OCI-LY7 (cell line): ENCODE measurements at regions of chr1 and their contacts with region 1.

Region 1: GRCh38 chr1:93846211-93846991 is 32.6 kb downstream of the DNTTIP2 start:
- DNase-seq: peak; percentile 92
- H3K4me3 ChIP-seq: peak overlapping the region; percentile 75
- H3K27ac ChIP-seq: peak overlapping the region; percentile 84
- H3K4me1 ChIP-seq: peaks cover 29% of the 10 kb centered on the region
- CTCF ChIP-seq: peak; percentile 59

Region 2: DNA sequence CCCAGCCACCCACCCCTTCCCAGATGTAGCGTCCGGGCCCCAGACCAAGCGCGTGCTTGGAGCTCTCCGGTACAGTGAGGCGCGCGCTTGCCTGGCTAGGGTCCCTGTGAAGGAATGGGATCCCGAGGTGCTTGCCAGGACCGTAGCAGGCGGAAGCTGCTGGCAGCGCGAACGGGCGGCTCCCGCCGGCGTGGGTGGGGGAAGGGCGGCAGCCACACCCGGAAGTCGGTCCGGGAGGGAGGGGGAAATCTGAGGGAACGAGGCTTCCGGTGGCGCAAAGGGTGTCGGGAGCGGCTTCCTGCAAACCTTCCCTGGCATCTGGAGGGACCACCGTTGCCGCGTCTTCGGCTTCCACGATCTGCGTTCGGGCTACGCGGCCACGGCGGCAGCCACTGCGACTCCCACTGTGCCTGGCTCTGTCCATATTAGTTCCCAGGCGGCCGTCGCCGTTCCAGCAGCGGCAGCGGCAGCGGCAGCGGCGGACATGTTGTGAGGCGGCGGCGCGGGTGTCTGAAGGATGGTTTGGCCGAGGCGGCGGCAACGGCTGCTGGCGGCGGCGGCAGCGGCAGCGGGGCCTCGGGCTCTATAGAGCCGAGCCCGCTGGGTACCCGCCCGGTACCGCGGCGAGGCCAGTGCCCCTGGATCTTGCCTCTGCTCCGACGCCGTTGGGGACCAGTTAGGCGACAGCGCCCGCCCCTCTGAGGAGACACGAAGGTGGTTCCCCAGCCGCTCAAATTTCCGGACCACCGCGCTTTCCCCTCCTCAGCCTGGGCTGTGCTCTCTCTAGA is 500.6 kb before region 1 on chr1 and contains the start of gene DR1:
- CTCF ChIA-PET with region 1: no interaction called
- POLR2A ChIA-PET with region 1: interaction called, 4 read pairs
- intact Hi-C with region 1: loop called (anchors 2 kb)
- DNase-seq: peak; percentile 92
- H3K4me3 ChIP-seq: peak within 1 kb of the TSS; percentile 87
- H3K27ac ChIP-seq: peak within 1 kb of the TSS; percentile 74
- H3K4me1 ChIP-seq: peaks cover 20% of the 10 kb centered on the region
- CTCF ChIP-seq: no peak
- total RNA-seq, gene DR1: 61.3 and 81.3 TPM in 2 replicates

Region 3: GRCh38 chr1:93629099-93630059 is 217.0 kb before region 1 on chr1:
- CTCF ChIA-PET with region 1: interaction called, 9 read pairs
- POLR2A ChIA-PET with region 1: interaction called, 7 read pairs
- intact Hi-C with region 1: loop called (anchors 1 kb)
- DNase-seq: peak; percentile 83
- H3K4me3 ChIP-seq: no peak overlapping the region
- H3K27ac ChIP-seq: no peak overlapping the region
- H3K4me1 ChIP-seq: peaks cover 5% of the 10 kb centered on the region
- CTCF ChIP-seq: peak; percentile 99

Region 4: DNA sequence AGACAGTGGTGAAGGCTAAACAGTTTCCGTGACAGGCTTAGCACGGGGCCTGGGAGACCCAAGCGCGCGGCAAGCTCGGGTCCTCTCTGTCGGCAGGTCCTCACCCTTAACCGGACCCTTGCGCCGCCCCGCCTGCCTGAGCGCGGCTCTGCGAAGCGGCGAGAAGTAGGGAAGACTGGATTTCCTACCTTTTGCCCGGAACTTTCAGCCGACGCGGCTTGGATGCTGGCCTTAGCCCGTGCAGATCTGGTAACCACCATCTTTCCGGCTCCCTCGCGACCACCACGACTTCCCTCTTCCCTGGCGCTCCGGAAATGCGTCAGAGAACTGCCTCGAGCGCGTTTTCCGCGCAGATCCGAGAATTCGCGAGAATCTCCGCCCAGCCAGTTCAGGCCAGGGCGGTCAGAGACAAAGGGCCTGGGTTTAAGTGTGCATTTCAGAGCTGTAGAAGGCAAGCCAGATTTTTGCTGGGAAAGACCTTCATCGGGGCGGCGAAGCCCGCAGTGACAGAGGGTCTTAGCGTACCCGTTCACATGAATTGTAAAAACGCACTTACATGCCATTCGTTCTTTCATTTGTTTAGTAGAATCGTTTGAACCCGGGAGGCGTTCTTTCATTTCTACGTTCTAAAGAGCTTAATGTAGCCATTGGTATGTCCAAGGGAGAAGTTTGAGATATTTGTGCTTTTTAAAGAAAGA is 32.6 kb after region 1 on chr1 and contains the start of gene DNTTIP2:
- CTCF ChIA-PET with region 1: no interaction called
- POLR2A ChIA-PET with region 1: interaction called, 4 read pairs
- intact Hi-C with region 1: loop called (anchors 1 kb)
- DNase-seq: peak; percentile 93
- H3K4me3 ChIP-seq: peak within 1 kb of the TSS; percentile 94
- H3K27ac ChIP-seq: peak within 1 kb of the TSS; percentile 51
- H3K4me1 ChIP-seq: peaks cover 30% of the 10 kb centered on the region
- CTCF ChIP-seq: no peak
- total RNA-seq, gene DNTTIP2: 39.7 and 47.4 TPM in 2 replicates

Region 5: GRCh38 chr1:94081566-94082344 is 235.4 kb after region 1 on chr1:
- CTCF ChIA-PET with region 1: no interaction called
- POLR2A ChIA-PET with region 1: interaction called, 10 read pairs
- intact Hi-C with region 1: no loop called
- DNase-seq: no peak
- H3K4me3 ChIP-seq: no peak overlapping the region
- H3K27ac ChIP-seq: no peak overlapping the region
- H3K4me1 ChIP-seq: no peaks in the 10 kb centered on the region
- CTCF ChIP-seq: no peak